ENCODE measurements at regions of chr6 and their contacts with region 1.

Region 1: DNA sequence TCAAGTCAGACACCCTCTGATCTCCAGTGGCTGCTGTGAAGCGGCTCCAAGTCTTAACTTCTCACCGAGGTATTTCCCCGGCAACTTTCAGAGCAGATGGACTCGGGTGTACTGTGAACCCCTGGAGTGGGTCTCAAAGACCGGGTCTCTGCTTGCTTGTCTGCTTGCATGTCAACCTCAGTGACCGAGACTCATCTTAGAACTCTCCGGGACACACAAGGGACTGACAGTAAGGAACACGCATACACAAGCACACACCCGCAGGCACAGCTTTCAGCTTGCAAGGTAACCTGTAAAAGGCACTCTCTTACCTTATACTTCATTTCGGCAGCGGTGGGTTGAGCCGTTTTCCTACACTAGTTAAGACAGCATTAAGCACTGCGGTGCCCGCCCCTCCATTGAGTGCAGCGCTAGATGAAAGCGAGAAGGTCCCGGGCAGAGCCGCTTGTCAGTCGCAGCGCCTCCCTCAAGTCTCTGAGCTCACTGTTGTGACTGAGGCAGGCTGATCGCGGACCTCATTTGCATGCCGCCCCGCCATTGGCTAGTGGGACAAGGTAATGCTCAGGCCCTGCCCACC is at the start of gene NEDD9:
- DNase-seq: peak; percentile 89
- H3K4me3 ChIP-seq: peak within 1 kb of the TSS; percentile 89
- H3K27ac ChIP-seq: peak within 1 kb of the TSS; percentile 84
- H3K27me3 ChIP-seq: no peaks in the 10 kb centered on the region
- CTCF ChIP-seq: no peak
- polyA plus RNA-seq, gene NEDD9: 7.2 and 10.9 TPM in 2 replicates

Region 2: DNA sequence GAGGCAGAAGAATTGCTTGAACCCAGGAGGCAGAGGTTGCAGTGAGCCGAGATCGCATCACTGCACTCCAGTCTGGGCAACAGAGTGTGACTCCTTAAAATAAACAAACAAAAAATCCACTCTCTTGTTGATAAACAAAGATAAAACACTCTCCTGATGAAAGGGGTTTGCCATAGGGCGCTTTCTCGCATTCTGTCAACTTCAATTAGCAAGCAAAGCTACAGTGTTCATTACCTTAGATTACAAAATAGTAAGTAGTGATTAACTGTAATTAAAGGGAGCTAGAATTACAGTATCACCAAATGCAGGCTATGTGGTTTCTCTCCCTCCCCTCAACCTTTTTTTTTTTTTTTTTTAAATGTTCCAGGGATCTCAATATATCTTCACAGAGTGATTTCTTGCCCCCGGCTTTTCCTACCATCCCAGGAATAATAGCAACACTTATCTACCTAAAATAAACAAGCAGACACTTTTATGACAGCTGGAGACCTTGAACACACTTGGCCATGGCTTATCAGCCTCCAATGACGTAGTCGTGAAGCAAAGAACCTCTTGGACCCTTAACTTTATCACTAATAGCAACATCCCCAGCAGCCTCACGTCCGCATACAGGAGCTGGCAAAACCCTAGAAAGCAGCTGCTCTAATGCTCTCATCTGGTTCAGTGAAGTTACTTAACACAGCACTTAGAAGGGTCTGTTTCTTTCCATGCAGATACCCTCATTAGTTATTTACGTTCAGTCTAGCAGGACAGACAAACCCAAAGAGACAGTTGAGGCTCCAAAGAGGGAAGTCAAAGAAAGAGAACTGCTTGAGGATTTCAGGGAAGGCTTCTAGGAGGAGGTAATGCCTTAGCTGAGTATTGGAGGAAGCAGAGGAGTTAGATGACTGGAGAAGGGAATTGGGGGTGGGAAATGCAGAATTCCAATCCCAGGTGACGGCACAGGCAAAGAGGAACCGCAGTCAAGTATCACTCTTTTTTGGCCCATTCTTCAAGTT is 38.0 kb after region 1 on chr6:
- CTCF ChIA-PET with region 1: interaction called, 3 read pairs
- POLR2A ChIA-PET with region 1: interaction called, 11 read pairs
- DNase-seq: no peak
- H3K4me3 ChIP-seq: no peak overlapping the region
- H3K27ac ChIP-seq: peak overlapping the region; percentile 88
- H3K27me3 ChIP-seq: no peaks in the 10 kb centered on the region
- CTCF ChIP-seq: no peak

Measured in AG04450 (cell line).